ENCODE measurements at regions of chr11 and their contacts with region 1.

Region 1: DNA sequence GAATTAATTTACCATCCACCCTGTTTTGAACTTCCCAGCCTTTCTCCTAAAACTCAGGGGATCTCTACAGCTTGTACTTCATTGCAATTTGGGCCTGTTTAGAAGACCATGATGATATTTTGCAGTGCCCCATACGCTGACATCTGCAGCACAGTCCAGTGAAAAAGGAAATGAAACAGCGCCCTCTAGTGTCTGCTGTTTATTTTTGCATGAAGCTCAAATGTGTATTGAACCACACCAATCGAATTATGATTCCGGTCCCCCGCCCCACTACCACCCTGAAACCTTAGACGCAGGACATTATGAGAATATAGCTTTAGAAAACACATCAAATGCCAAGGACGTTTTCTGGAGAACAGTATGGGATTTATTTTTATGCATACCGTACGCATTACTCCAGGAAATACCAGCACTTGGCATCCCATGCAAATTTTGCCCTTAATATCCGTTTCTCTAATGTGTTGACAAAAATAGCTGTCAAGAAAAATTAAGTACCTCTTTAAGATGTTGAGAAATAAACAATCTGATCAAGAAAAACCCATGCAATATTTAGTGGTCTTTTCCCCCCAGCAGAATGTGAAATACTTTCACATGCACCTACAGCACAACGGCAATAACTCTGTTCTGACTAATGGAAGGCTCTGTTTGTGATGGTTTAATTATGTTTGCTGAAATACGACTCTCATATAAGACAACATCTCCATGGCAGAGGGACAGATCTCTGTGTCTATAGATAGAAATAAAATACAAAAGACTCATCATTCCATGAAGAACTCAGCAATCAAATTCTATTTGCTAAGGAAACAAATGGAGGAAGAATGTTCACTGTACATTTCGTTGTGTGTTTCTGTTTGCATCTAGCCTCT is 93.9 kb downstream of the TECTA start:
- DNase-seq: peak; percentile 65
- ATAC-seq: peak; percentile 83
- H3K4me3 Mint-ChIP-seq: no peak overlapping the region
- H3K27ac Mint-ChIP-seq: no peak overlapping the region
- H3K4me1 Mint-ChIP-seq: peaks cover 3% of the 10 kb centered on the region
- H3K27me3 Mint-ChIP-seq: peaks cover 17% of the 10 kb centered on the region

Region 2: DNA sequence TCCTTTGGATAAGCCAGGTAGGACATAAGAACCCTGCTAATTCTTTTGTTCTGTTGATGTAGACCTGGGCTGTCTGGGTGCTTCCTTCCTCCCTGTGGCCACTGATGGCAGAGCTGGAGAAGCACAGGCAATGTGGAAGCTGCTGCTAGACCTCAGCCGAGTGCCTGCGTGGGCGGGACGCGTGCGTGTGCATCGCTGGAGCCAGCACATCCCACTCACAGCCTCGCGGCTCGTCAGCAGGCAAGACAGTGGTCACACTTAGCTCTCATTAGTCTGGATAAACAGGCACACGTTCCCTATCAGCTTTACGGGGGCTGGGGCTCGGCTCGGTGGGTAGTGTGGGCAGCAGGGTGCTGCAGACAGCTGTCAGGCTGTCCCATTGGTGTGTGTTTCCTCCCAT is 527.7 kb before region 1 on chr11:
- CTCF ChIA-PET with region 1: no interaction called
- POLR2A ChIA-PET with region 1: no interaction called
- intact Hi-C with region 1: no loop called
- DNase-seq: peak; percentile 16
- ATAC-seq: no peak
- H3K4me3 Mint-ChIP-seq: no peak overlapping the region
- H3K27ac Mint-ChIP-seq: no peak overlapping the region
- H3K4me1 Mint-ChIP-seq: no peaks in the 10 kb centered on the region
- H3K27me3 Mint-ChIP-seq: peaks cover 21% of the 10 kb centered on the region

Region 3: DNA sequence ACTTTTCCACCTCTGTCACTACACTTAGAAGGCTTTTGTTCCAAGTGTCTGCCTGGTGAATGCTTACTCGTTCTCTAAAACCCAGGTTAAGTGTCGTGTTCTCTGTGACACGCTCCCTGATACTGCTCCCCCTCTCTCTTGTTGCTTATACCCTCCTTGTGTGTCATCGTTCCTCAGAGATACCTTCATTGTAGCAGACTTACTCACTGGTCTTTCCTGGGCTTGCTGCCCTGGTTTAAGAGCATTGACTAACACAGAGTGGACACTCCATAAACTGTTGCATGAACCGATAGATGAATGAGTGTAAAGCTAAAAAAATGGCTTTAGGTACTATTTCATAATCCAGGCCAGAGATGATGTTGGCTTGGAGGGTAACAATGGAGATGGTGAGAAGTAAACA is 512.1 kb before region 1 on chr11:
- CTCF ChIA-PET with region 1: no interaction called
- POLR2A ChIA-PET with region 1: no interaction called
- intact Hi-C with region 1: loop called in 1 of 2 experiments (anchors 10 kb)
- DNase-seq: no peak
- ATAC-seq: no peak
- H3K4me3 Mint-ChIP-seq: no peak overlapping the region
- H3K27ac Mint-ChIP-seq: no peak overlapping the region
- H3K4me1 Mint-ChIP-seq: no peaks in the 10 kb centered on the region
- H3K27me3 Mint-ChIP-seq: peaks cover 29% of the 10 kb centered on the region

Region 4: GRCh38 chr11:120817158-120817557 is 377.8 kb before region 1 on chr11:
- CTCF ChIA-PET with region 1: no interaction called
- POLR2A ChIA-PET with region 1: no interaction called
- intact Hi-C with region 1: no loop called
- DNase-seq: no peak
- ATAC-seq: no peak
- H3K4me3 Mint-ChIP-seq: no peak overlapping the region
- H3K27ac Mint-ChIP-seq: no peak overlapping the region
- H3K4me1 Mint-ChIP-seq: no peaks in the 10 kb centered on the region
- H3K27me3 Mint-ChIP-seq: peaks cover 21% of the 10 kb centered on the region

Region 5: GRCh38 chr11:120929664-120930154 is 265.3 kb before region 1 on chr11:
- CTCF ChIA-PET with region 1: interaction called, 5 read pairs
- POLR2A ChIA-PET with region 1: no interaction called
- intact Hi-C with region 1: loop called (anchors 1 to 5 kb)
- DNase-seq: peak; percentile 76
- ATAC-seq: peak; percentile 74
- H3K4me3 Mint-ChIP-seq: no peak overlapping the region
- H3K27ac Mint-ChIP-seq: no peak overlapping the region
- H3K4me1 Mint-ChIP-seq: no peaks in the 10 kb centered on the region
- H3K27me3 Mint-ChIP-seq: no peaks in the 10 kb centered on the region

Region 6: DNA sequence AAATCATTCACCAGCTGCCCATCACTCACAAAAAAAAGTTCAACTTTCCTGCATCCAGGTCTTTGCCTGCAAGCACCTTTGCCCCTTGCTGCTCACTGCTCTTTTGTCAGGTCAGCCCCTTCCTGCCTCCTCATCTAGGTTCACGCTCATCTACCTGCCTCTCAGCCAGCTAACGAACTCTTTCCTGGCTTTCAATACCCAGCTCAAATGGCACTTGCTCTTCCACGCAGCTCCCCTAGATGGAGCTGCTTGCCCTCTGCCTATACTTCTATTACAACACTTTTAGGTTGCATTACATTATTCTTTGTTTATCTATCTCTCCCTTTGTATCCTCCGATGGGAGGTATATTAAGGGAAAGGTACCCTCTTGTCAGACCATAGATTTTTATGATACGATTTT is 249.9 kb before region 1 on chr11:
- CTCF ChIA-PET with region 1: interaction called, 5 read pairs
- POLR2A ChIA-PET with region 1: no interaction called
- intact Hi-C with region 1: loop called in 1 of 2 experiments (anchors 1 kb)
- DNase-seq: peak; percentile 14
- ATAC-seq: no peak
- H3K4me3 Mint-ChIP-seq: no peak overlapping the region
- H3K27ac Mint-ChIP-seq: no peak overlapping the region
- H3K4me1 Mint-ChIP-seq: no peaks in the 10 kb centered on the region
- H3K27me3 Mint-ChIP-seq: peaks cover 18% of the 10 kb centered on the region

Region 7: DNA sequence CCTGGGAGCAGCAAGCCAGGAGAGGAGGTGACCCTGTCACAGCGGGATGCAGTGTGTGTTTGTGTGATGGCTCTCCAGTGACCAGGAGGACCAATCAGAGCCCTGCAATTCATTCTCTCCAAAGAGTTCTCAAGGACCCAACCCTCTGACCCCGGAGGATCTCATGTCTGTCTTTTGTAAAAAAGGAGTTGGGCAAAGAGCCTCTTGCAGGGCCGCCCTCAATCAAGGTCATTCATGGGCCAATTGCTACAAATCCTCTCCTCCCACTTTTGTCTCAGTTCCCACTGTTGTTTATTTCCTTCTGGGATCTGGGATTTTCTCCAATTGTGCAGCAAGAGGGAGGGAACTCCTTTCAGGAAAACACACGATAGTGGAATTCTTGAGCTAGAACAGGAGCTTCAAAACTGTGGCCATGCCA is 89.9 kb before region 1 on chr11:
- CTCF ChIA-PET with region 1: interaction called, 5 read pairs
- POLR2A ChIA-PET with region 1: no interaction called
- intact Hi-C with region 1: loop called in 1 of 2 experiments (anchors 5 kb)
- DNase-seq: no peak
- ATAC-seq: no peak
- H3K4me3 Mint-ChIP-seq: no peak overlapping the region
- H3K27ac Mint-ChIP-seq: no peak overlapping the region
- H3K4me1 Mint-ChIP-seq: no peaks in the 10 kb centered on the region
- H3K27me3 Mint-ChIP-seq: no peaks in the 10 kb centered on the region

Region 8: GRCh38 chr11:121153472-121153871 is 41.5 kb before region 1 on chr11:
- CTCF ChIA-PET with region 1: interaction called, 10 read pairs
- POLR2A ChIA-PET with region 1: no interaction called
- intact Hi-C with region 1: no loop called
- DNase-seq: peak; percentile 8
- ATAC-seq: no peak
- H3K4me3 Mint-ChIP-seq: no peak overlapping the region
- H3K27ac Mint-ChIP-seq: no peak overlapping the region
- H3K4me1 Mint-ChIP-seq: no peaks in the 10 kb centered on the region
- H3K27me3 Mint-ChIP-seq: no peaks in the 10 kb centered on the region

Region 9: DNA sequence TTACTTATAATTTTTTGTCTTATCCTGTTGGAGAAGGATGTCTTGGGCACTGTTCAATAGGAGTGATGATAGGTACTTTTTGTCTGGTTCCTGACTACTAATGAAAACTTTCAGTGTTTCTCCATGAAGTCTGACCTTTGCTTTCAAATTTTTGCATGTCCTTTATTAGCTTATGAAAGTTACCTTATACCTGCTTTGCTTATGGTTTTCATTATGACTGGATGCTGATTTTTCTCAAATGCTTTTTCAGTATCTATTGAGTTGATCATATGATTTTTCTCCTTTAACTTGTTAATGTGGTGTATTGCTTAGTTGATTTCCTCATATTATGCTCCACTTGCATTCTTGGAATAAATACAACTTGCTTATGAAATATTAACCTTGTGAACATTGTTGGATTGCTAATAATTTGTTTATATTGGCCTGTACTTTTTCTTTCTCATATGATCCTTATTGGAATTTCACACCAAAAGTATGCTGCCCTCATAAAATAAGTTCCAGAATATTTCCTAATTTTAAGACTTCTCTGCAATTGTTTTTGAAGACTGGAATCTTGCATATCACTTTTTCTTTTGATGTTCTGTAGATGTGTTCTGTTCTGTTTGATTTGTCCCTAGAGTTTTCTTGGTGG is 12.6 kb after region 1 on chr11:
- CTCF ChIA-PET with region 1: interaction called, 11 read pairs
- POLR2A ChIA-PET with region 1: no interaction called
- intact Hi-C with region 1: no loop called
- DNase-seq: no peak
- ATAC-seq: no peak
- H3K4me3 Mint-ChIP-seq: no peak overlapping the region
- H3K27ac Mint-ChIP-seq: no peak overlapping the region
- H3K4me1 Mint-ChIP-seq: no peaks in the 10 kb centered on the region
- H3K27me3 Mint-ChIP-seq: peaks cover 17% of the 10 kb centered on the region

Measured in activated CD4-positive, alpha-beta T cell treated with anti-CD3 and anti-CD28 coated beads for 36 hours (primary cell).